ENCODE measurements at regions of chr11 and their contacts with region 1.

Region 1: GRCh38 chr11:62108017-62108750 is 15.6 kb upstream of the INCENP start:
- DNase-seq: peak; percentile 12
- H3K4me3 Mint-ChIP-seq: no peak overlapping the region
- H3K27ac Mint-ChIP-seq: no peak overlapping the region
- H3K4me1 Mint-ChIP-seq: peaks cover 13% of the 10 kb centered on the region
- H3K27me3 Mint-ChIP-seq: peaks cover 4% of the 10 kb centered on the region

Region 2: DNA sequence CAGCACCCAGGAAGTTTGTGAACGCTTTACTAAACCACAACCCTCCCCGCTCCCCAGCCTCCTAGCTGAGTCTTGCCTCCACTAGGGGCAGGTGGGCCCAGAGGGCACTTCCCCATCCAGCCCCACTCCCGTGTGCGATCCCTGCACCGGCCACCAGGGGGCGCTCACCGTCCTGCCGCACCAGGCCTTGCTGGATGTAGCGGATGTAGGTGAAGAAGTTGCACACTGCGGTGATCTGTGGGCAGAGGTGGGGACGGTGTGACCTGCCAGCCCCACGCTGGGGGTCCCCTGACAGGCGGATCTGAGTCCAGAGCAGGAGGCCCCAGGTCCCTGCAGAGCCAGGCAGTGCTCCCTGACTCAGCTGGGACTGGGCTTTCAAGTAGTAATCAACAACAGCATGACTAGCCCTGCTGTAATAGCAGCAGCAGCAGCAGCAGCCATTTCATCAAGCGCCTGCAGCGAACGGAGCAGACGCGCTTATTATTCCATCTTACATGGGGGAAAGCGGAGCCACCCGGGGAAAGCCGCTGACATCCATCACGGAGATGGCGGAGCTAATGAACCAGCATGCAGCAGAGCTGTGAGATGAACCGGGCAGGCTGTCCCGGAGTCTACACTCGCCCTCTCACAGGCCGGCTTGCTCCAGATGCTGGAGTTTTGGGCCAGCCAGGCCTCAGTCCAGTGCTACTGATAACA is 208.9 kb before region 1 on chr11:
- intact Hi-C with region 1: loop called (anchors 1 kb)
- DNase-seq: peak; percentile 86
- H3K4me3 Mint-ChIP-seq: no peak overlapping the region
- H3K27ac Mint-ChIP-seq: no peak overlapping the region
- H3K4me1 Mint-ChIP-seq: peaks cover 5% of the 10 kb centered on the region
- H3K27me3 Mint-ChIP-seq: peaks cover 4% of the 10 kb centered on the region